Cardiac septum (tissue), 1 donor: ENCODE measurements at regions of chr12 and their contacts with region 1.

Region 1: GRCh38 chr12:116539905-116540482 is 19.2 kb upstream of the MAP1LC3B2 start:
- DNase-seq: no peak

Region 2: DNA sequence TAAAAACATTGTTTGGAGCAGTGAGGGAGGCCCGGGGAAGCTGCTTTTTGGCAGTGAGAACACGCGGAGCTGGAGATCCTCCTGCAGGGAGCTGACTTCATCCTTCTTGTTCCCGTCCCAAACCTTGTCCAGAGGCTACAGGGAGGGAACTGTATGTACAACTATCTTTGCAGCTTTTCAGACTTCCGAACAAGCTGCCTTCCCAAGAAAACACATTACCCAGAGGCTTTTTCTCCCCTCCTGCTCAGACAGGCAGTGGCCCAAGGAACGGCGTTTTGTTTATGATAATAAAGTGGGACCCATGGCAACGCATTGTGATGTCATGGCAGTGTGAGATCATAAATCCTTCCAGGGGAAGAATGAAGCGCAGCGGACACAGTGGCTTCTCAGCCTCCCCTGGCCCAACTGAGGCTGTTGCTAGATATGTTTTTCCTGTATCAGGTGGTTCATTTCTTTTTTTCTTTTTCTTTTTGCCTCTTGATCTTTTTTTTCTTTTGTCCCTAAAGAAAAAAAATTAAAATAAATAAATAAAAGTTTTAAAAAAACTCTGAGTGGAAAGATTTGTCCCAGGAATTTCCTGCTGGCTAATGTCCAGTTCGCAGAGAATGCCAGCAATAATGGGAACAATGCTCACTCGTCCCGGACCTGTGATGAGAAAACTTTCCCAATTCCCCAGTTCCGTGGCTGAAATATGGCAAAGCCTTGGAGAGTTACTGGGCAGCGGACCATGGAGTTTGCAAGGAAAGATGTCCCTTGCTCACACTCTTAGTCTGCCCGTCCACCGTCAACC is 84.3 kb before region 1 on chr12:
- intact Hi-C with region 1: loop called (anchors 5 kb)
- DNase-seq: peak; percentile 79